ENCODE measurements at regions of chr16 and their contacts with region 1.

Region 1: GRCh38 chr16:22648141-22648540 is 137.4 kb downstream of the NPIPB5 start:
- DNase-seq: no peak
- ATAC-seq: no peak
- H3K4me3 ChIP-seq: no peak overlapping the region
- H3K27ac ChIP-seq: no peak overlapping the region
- H3K4me1 ChIP-seq: no peaks in the 10 kb centered on the region
- H3K27me3 ChIP-seq: peaks cover 54% of the 10 kb centered on the region
- CTCF ChIP-seq: no peak
- POLR2A ChIP-seq: no peak
- RAD21 ChIP-seq: no peak

Region 2: DNA sequence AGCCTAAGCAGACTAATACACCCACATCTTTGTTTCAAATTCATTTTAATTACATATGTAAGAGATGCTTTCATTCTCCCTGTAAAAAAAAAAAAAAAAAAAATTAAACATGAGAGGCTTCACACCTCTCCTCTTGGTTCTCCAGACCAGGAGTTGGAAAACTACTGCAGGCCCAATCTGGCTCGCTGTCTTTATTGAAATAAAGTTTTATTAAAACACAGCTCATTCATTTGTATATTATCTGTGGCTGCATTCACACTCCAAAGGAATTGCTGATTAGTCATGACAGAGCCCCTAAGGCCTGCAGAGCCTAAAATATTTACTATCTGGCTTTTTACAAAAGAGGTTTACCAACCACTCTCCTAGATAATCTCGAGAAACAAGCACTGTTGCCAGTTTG is 18.4 kb before region 1 on chr16:
- CTCF ChIA-PET with region 1: no interaction called
- POLR2A ChIA-PET with region 1: interaction called, 3 read pairs
- RAD21 ChIA-PET with region 1: no interaction called
- intact Hi-C with region 1: loop called (anchors 2 kb)
- DNase-seq: no peak
- ATAC-seq: no peak
- H3K4me3 ChIP-seq: no peak overlapping the region
- H3K27ac ChIP-seq: no peak overlapping the region
- H3K4me1 ChIP-seq: no peaks in the 10 kb centered on the region
- H3K27me3 ChIP-seq: peaks cover 11% of the 10 kb centered on the region
- CTCF ChIP-seq: no peak
- POLR2A ChIP-seq: no peak
- RAD21 ChIP-seq: no peak

Region 3: DNA sequence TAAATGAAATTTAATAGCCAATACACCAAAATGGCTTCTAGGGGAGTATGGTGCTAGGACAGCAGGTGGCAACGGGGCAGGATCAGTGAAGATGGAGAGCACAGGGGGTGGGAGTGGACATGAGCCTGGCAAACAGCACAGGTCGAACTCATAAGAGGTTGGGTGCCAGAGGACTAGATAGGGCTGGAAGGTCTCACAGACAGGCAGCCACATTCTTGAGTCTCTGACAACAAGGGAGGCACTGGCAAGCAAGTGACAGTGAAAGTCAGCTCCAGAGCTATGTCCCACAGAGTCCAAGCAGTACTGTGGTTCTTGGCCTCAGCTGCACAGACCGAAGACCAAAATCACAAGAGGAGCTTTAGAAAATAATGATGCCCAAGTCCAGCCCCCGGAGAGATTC is 439.9 kb after region 1 on chr16:
- CTCF ChIA-PET with region 1: no interaction called
- POLR2A ChIA-PET with region 1: no interaction called
- RAD21 ChIA-PET with region 1: no interaction called
- intact Hi-C with region 1: no loop called
- DNase-seq: no peak
- ATAC-seq: no peak
- H3K4me3 ChIP-seq: no peak overlapping the region
- H3K27ac ChIP-seq: no peak overlapping the region
- H3K4me1 ChIP-seq: no peaks in the 10 kb centered on the region
- H3K27me3 ChIP-seq: no peaks in the 10 kb centered on the region
- CTCF ChIP-seq: no peak
- POLR2A ChIP-seq: no peak
- RAD21 ChIP-seq: no peak

Measured in HCT116 (cell line).